ENCODE measurements at regions of chrX and their contacts with region 1.

Region 1: GRCh38 chrX:69222103-69223090 is 57.1 kb upstream of the PJA1 start:
- DNase-seq: peak; percentile 56 to 80
- ATAC-seq: peak; percentile 75 to 88 (median 83)
- H3K4me3 ChIP-seq: no peak overlapping the region
- H3K27ac ChIP-seq: no peak overlapping the region
- H3K4me1 ChIP-seq: no peaks in the 10 kb centered on the region
- H3K27me3 ChIP-seq: peaks cover 0 to 13% (median 0%) of the 10 kb centered on the region in 3 donors
- CTCF ChIP-seq: peak; percentile 75

Region 2: DNA sequence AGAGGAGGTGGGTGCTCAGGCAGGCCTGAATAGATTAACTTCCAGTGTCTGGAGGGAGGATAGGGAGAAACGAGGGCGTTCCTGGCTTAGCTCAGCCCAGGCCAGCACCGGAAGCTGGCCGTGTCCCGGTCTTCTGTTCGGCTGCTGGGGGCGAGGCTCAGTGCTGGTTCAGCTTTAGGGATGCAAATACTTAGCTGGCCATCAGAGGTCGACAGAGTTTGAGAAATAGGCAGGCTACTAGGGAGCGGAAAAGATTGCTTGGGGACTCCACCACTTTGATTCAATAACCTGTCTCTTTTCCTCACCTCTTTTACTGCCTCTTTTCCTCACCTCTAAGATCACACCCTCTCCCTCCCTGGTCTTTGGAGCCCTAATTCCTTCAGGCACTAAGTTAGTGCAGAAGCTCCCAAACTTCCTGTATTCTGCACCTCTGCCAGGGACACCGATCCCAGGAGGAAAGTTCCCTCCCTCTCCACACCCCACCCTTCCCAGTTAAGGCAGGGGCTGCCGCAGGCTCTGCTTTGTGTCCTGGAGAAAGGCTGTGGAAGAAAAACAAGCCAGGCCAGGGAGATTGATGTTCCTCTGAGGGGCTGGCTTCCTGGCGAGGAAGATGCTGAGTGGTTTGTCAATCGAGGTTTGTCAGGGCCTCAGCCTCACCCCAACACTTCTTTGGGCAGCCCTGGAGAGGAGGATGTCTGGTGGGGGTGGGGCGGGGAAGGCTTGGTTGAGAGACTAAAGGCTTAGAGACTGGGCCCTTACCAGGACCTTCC is 399.6 kb before region 1 on chrX:
- intact Hi-C with region 1: loop called (anchors 1 to 5 kb)
- DNase-seq: peak in 1 of 2 donors; percentile 58
- ATAC-seq: peak; percentile 63 to 78 (median 72)
- H3K4me3 ChIP-seq: no peak overlapping the region
- H3K27ac ChIP-seq: no peak overlapping the region
- H3K4me1 ChIP-seq: no peaks in the 10 kb centered on the region
- H3K27me3 ChIP-seq: peaks cover 0 to 24% (median 0%) of the 10 kb centered on the region in 3 donors
- CTCF ChIP-seq: peak; percentile 52

Region 3: GRCh38 chrX:69133921-69134542 is 88.4 kb before region 1 on chrX:
- intact Hi-C with region 1: no loop called
- DNase-seq: no peak
- ATAC-seq: peak in 2 of 4 donors; percentile 45 to 52
- H3K4me3 ChIP-seq: no peak overlapping the region
- H3K27ac ChIP-seq: no peak overlapping the region
- H3K4me1 ChIP-seq: no peaks in the 10 kb centered on the region
- H3K27me3 ChIP-seq: peaks cover 0 to 31% (median 0%) of the 10 kb centered on the region in 3 donors
- CTCF ChIP-seq: peak; percentile 27

Measured in psoas muscle (tissue), 8 donors.